OCI-LY7 (cell line): ENCODE measurements at regions of chr2 and their contacts with region 1.

Region 1: GRCh38 chr2:26846328-26847306 is 1.3 kb upstream of the DPYSL5 start:
- DNase-seq: peak; percentile 74
- H3K4me3 ChIP-seq: no peak overlapping the region
- H3K27ac ChIP-seq: no peak overlapping the region
- H3K4me1 ChIP-seq: no peaks in the 10 kb centered on the region
- CTCF ChIP-seq: peak; percentile 91

Region 2: GRCh38 chr2:26668856-26669750 is 177.5 kb before region 1 on chr2:
- CTCF ChIA-PET with region 1: no interaction called
- POLR2A ChIA-PET with region 1: no interaction called
- intact Hi-C with region 1: no loop called
- DNase-seq: no peak
- H3K4me3 ChIP-seq: no peak overlapping the region
- H3K27ac ChIP-seq: no peak overlapping the region
- H3K4me1 ChIP-seq: no peaks in the 10 kb centered on the region
- CTCF ChIP-seq: no peak

Region 3: DNA sequence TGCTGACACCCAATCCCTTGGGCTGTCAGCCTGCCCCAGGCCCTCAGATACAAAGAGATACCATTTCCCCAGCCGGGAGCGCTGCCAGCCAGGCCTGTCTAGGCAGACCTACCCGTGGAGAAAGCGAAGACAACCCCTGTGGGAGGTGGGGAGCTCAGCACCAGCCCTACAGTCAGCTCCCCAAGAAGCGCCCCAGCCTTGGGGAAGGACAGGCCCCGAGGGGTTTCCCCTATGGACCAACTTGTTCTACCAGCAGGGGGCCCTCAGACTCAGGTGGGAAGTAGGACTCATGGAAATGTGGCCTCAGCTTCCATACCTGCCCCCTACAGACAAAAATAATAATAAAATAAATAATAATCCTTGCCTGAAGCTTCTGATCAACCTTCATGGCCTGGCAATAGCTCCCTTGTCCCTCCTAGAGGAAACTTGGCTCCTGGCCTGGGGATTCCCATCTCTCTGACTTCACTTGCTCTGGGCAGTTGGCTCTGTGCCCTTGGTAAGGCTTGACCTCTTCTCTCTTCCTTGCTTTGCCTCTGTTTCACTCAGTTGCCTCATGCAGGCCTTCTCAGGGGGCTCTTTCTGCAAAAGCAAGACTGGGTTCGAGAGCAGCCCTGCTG is 75.5 kb before region 1 on chr2:
- CTCF ChIA-PET with region 1: no interaction called
- POLR2A ChIA-PET with region 1: no interaction called
- intact Hi-C with region 1: no loop called
- DNase-seq: peak; percentile 44
- H3K4me3 ChIP-seq: no peak overlapping the region
- H3K27ac ChIP-seq: no peak overlapping the region
- H3K4me1 ChIP-seq: no peaks in the 10 kb centered on the region
- CTCF ChIP-seq: peak; percentile 71

Region 4: DNA sequence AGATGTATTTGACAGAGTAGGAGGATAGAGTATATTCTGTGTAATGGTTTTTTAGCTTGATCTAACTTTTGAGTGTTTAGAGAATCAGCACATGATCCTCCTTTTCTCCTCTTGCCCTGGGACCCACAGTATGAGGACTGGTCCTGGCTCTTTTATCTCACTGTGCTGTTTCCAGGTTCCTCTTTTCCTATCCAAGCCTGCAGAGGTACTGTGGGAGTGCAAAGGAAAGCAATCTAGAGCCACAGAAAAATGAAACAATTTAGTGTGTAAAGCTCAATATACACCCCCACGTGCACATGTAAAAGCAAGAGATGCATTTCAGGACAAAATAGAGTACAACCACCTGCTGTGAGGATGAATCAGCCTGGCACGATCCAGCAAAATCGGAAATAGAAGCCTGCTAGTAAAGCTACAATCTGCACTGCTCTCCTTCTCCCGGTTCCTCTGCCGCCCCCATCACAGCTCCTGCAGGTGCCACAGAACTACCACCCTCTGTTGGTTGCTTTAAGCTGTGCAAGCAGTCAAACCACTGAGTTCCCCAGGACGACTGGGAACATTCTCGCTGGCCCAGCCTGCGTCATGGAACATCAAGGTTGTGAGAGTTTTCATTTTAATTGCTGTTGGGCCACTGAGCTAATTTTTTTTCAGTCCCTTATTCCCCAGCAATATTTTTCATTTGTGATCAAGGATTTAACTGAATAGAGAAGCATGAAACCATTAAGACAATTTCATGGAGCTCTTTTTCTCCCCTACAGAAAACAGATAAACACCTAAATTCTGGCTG is 76.0 kb after region 1 on chr2:
- CTCF ChIA-PET with region 1: no interaction called
- POLR2A ChIA-PET with region 1: no interaction called
- intact Hi-C with region 1: loop called (anchors 1 kb)
- DNase-seq: peak; percentile 61
- H3K4me3 ChIP-seq: no peak overlapping the region
- H3K27ac ChIP-seq: no peak overlapping the region
- H3K4me1 ChIP-seq: no peaks in the 10 kb centered on the region
- CTCF ChIP-seq: peak; percentile 82

Region 5: GRCh38 chr2:26942543-26943295 is 96.1 kb after region 1 on chr2:
- CTCF ChIA-PET with region 1: no interaction called
- POLR2A ChIA-PET with region 1: interaction called, 5 read pairs
- intact Hi-C with region 1: loop called (anchors 1 kb)
- DNase-seq: peak; percentile 60
- H3K4me3 ChIP-seq: no peak overlapping the region
- H3K27ac ChIP-seq: no peak overlapping the region
- H3K4me1 ChIP-seq: no peaks in the 10 kb centered on the region
- CTCF ChIP-seq: peak; percentile 87

Region 6: DNA sequence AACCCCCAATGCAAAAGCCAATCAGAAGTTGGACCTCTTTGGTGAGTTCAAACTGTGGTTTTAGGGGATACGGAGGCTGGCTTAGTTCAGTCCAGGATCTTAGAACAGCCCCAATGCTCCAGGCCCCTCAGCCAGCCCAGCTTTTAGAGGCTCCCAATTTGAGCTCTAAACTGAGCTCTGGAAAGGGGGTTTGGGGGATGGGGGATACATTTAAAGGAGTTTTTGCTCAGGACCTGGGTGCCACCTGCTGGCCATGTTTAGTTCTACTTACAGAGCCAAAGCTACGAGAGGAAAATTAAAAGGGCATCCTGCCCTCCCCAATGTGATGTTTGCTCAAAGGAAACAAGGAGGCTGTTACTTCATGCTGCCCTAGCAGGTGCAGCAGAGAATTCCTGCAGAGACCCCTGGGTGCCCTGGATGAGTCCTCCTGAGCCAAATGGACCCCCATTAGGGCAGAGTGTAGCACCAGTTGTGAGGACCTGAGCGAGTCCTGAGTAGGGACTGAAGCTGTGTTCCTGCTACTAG is 170.2 kb after region 1 on chr2:
- CTCF ChIA-PET with region 1: no interaction called
- POLR2A ChIA-PET with region 1: no interaction called
- intact Hi-C with region 1: loop called (anchors 5 kb)
- DNase-seq: peak; percentile 71
- H3K4me3 ChIP-seq: no peak overlapping the region
- H3K27ac ChIP-seq: no peak overlapping the region
- H3K4me1 ChIP-seq: peaks cover 9% of the 10 kb centered on the region
- CTCF ChIP-seq: peak; percentile 88